Mammary epithelial cell (primary cell): ENCODE measurements at regions of chr14 and their contacts with region 1.

Region 1: GRCh38 chr14:34982417-34983147 is at the start of gene SRP54:
- DNase-seq: peak; percentile 97
- H3K4me3 ChIP-seq: peak within 1 kb of the TSS; percentile 70 to 91 (median 90)
- H3K27ac ChIP-seq: peak within 1 kb of the TSS; percentile 91
- H3K4me1 ChIP-seq: peaks cover 14% of the 10 kb centered on the region
- H3K27me3 ChIP-seq: no peaks in the 10 kb centered on the region
- CTCF ChIP-seq: peak in 1 of 2 donors; percentile 44
- total RNA-seq, gene SRP54: 51.3 to 61.4 TPM

Region 2: DNA sequence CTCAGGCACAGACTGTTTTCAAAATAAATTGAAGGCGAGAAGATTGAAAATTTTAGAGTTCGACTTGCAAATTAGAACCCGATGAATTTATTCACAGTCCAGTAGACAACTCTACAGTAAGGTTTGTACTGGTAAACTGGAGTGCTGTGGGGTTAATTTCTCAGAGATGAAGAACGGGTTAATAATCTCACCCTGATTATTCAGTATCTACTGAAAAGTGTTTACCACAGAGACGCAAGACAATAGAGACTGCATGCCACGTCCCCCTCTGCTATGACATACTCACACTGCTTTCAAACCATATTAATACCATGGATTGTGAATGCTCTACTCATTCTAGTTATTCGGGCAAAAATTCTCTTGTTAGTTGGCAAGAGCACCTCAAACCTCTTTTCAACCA is 304.3 kb before region 1 on chr14:
- CTCF ChIA-PET with region 1: no interaction called
- dilution Hi-C with region 1: no loop called
- in situ Hi-C with region 1: no loop called
- intact Hi-C with region 1: loop called (anchors 5 kb)
- DNase-seq: peak; percentile 42
- H3K4me3 ChIP-seq: no peak overlapping the region
- H3K27ac ChIP-seq: peak overlapping the region; percentile 80
- H3K4me1 ChIP-seq: peaks cover 14% of the 10 kb centered on the region
- H3K27me3 ChIP-seq: no peaks in the 10 kb centered on the region
- CTCF ChIP-seq: no peak

Region 3: GRCh38 chr14:34714320-34715126 is 268.1 kb before region 1 on chr14 and contains the start of gene CFL2:
- CTCF ChIA-PET with region 1: no interaction called
- dilution Hi-C with region 1: no loop called
- in situ Hi-C with region 1: no loop called
- intact Hi-C with region 1: loop called (anchors 5 kb)
- DNase-seq: peak; percentile 71
- H3K4me3 ChIP-seq: peak within 1 kb of the TSS; percentile 68 to 87 (median 72)
- H3K27ac ChIP-seq: peak within 1 kb of the TSS; percentile 73
- H3K4me1 ChIP-seq: peaks cover 23% of the 10 kb centered on the region
- H3K27me3 ChIP-seq: no peaks in the 10 kb centered on the region
- CTCF ChIP-seq: no peak
- total RNA-seq, gene CFL2: 30.1 to 34.5 TPM

Region 4: DNA sequence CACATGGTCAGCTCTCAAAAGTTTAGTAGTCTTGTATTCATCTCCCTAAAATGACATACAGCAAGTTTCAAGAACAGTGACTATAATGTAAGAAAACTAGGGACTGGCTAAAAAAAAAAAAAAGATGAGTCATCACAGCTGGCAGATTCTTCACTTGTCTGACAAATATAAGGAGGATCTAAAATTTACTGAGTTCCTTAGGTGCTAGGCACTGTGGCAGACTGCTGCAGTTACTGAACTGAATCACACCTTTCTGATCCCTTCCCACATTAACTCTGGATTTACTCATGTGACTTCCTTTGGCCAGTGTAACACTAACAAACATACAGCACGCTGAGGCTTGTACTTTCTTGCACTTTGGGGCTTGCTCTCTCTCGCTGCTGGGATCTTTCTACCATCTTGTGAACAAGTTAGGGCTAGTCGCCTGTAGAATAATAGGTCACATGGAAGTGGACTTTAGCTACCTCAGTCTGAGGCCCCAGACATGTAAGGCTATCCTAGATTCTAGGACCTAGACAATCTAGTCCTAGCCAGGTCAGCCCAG is 139.5 kb before region 1 on chr14:
- CTCF ChIA-PET with region 1: interaction called, 3 read pairs
- dilution Hi-C with region 1: no loop called
- in situ Hi-C with region 1: no loop called
- intact Hi-C with region 1: loop called (anchors 1 kb)
- DNase-seq: peak; percentile 97
- H3K4me3 ChIP-seq: no peak overlapping the region
- H3K27ac ChIP-seq: peak overlapping the region; percentile 42
- H3K4me1 ChIP-seq: peaks cover 18% of the 10 kb centered on the region
- H3K27me3 ChIP-seq: no peaks in the 10 kb centered on the region
- CTCF ChIP-seq: no peak

Region 5: DNA sequence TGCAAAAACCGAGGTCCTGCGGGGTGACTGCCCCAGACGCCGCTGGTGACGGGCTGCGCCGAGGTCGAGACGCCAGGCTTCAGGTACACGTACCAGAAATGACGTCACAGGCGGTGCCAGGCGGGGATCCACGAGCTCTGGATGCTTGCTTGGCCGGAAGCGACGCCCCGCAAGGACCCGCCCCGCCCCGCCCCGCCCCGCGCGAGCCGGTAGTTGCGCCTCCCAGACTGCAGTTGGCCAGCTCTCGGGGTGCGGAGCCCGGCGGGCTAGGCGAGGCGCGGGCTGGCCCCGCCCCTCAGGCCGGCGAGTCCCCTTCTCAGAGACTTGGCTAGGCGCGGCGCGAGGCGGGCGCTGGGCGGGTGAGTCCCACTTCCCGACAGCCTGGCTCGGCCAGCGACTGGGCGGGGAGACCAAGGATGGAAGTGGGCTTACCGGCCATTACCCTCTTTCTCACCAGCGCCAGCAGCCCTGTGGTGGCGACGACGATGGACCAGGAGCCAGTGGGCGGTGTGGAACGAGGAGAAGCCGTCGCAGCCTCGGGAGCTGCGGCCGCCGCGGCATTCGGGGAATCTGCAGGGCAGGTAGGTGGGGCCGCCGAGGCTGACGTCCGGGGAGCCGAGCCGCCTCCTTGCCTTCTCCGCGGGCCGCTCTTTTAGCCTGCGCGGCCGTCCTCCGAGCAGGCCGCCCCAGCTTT is 63.6 kb after region 1 on chr14 and contains the start of gene FAM177A1:
- CTCF ChIA-PET with region 1: interaction called, 3 read pairs
- dilution Hi-C with region 1: no loop called
- in situ Hi-C with region 1: no loop called
- intact Hi-C with region 1: loop called (anchors 1 kb)
- DNase-seq: peak; percentile 98
- H3K4me3 ChIP-seq: peak within 1 kb of the TSS; percentile 88 to 98 (median 91)
- H3K27ac ChIP-seq: peak within 1 kb of the TSS; percentile 97
- H3K4me1 ChIP-seq: peaks cover 11% of the 10 kb centered on the region
- H3K27me3 ChIP-seq: no peaks in the 10 kb centered on the region
- CTCF ChIP-seq: no peak
- total RNA-seq, gene FAM177A1: 30.2 to 84.2 TPM